CD4-positive, alpha-beta memory T cell (primary cell): ENCODE measurements at regions of chr7 and their contacts with region 1.

Region 1: DNA sequence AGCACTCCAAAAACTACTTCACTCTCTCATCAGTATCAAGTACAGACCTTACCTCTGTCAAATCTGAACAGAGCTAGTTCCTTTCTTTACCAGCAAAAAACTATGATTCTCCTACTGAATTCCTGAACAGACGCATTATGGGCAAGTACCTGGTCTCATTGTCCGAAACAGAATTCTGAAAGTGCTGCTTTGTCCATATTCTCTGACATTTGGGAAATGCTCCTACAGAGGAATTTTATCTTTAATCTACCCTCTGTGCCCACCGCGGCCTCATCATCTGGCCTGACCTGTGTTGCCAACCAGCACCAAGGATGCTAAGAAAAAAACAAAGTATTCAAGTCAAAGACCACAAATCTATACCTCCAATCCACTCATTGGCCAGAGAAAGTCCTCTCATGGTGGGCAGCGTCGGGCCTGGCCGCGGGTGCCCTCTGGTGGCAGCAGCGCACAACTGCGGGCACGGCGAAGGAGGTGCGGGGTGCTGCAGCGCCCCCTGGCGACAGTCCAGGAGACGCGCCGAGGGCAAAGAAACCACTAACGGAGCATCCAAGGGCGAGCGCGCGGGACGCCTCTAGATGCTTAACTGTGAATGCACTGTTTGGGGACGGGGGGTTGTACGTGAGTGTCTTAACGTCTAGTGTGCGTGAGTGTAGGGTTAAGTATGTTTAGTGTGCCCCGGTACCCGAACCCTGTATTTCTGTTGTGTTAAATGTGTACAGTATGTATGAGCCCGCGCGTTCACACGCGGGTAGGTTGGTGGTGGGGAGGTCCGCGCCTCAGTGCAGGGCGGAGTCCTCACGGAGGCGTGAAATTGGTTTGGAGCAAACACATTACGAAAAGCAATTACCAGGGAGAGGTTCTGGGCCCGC is 5.0 kb upstream of the GBX1 start:
- DNase-seq: peak; percentile 72 to 80 (median 75)
- H3K4me3 ChIP-seq: no peak overlapping the region
- H3K4me3 Mint-ChIP-seq: peak overlapping the region in 1 of 8 donors; percentile 50
- H3K27ac ChIP-seq: no peak overlapping the region
- H3K27ac Mint-ChIP-seq: peak overlapping the region in 4 of 7 donors; percentile 41 to 65 (median 62)
- H3K4me1 ChIP-seq: no peaks in the 10 kb centered on the region
- H3K4me1 Mint-ChIP-seq: peaks cover 11 to 21% (median 16%) of the 10 kb centered on the region in 4 donors
- H3K27me3 ChIP-seq: peaks cover 14% of the 10 kb centered on the region
- H3K27me3 Mint-ChIP-seq: peaks cover 25 to 40% of the 10 kb centered on the region in 2 donors

Region 2: DNA sequence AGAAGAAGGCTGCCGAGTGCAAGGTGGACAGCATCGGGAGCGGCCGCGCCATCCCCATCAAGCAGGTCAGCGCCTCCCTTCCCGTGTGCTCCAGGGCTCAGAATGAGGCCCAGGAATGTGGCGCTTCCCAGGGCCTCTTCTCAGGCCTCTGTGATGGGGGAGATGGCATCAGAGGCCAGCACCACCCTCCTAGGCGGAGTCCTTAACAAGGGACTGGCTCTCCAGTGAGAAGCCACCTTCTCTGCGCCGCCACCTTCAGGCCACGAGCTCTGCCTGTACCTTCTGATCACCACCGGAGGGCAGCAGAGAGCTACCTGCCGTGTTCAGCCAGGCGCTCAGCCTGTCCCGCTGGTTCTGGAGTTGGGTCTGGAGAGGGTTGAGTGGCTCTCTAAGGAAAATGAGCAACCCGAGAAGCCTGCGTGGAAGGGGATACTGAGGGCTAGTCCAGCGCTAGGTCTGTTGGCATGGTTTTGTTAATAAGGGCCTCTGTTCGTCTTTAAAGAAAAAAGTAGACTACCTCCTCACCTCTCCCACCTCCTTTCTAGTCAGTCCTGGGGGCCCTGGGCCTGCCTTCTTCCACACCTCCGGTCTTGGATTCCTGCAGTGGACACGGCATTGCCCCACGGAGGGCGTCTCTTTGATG is 48.6 kb before region 1 on chr7:
- CTCF ChIA-PET with region 1: interaction called, 12 read pairs
- POLR2A ChIA-PET with region 1: no interaction called
- intact Hi-C with region 1: loop called (anchors 1 kb)
- DNase-seq: peak; percentile 73 to 82 (median 80)
- H3K4me3 ChIP-seq: no peak overlapping the region
- H3K4me3 Mint-ChIP-seq: no peak overlapping the region
- H3K27ac ChIP-seq: no peak overlapping the region
- H3K27ac Mint-ChIP-seq: peak overlapping the region in 3 of 7 donors; percentile 31 to 70 (median 47)
- H3K4me1 ChIP-seq: peaks cover 4% of the 10 kb centered on the region
- H3K4me1 Mint-ChIP-seq: peaks cover 4 to 19% (median 10%) of the 10 kb centered on the region in 4 donors
- H3K27me3 ChIP-seq: no peaks in the 10 kb centered on the region
- H3K27me3 Mint-ChIP-seq: no peaks in the 10 kb centered on the region

Region 3: GRCh38 chr7:151198945-151199848 is 26.7 kb after region 1 on chr7:
- CTCF ChIA-PET with region 1: no interaction called
- POLR2A ChIA-PET with region 1: no interaction called
- intact Hi-C with region 1: no loop called
- DNase-seq: no peak
- H3K4me3 ChIP-seq: no peak overlapping the region
- H3K4me3 Mint-ChIP-seq: no peak overlapping the region
- H3K27ac ChIP-seq: no peak overlapping the region
- H3K27ac Mint-ChIP-seq: peak overlapping the region in 2 of 7 donors; percentile 24 to 46
- H3K4me1 ChIP-seq: peaks cover 16% of the 10 kb centered on the region
- H3K4me1 Mint-ChIP-seq: peaks cover under 1 to 10% (median 9%) of the 10 kb centered on the region in 4 donors
- H3K27me3 ChIP-seq: peaks cover 9% of the 10 kb centered on the region
- H3K27me3 Mint-ChIP-seq: no peaks in the 10 kb centered on the region

Region 4: DNA sequence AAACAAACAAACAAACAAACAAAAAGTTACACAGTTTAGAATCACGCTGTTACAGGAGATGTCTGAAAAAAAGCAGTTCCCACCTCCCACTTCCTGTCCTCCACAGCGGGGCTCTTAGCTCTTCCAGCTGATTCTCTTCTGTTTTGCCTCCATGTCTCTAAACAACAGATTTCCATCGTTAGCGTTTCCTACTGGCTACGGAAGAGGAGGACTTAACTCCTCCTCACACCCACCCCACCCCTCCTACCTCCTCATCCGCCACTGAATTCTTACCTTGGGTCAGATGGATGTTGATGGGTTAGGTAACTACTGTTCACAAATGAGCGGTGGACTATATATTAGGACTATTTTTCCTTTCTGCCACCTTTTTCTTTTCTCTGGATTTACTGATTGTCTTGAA is 132.3 kb after region 1 on chr7:
- CTCF ChIA-PET with region 1: no interaction called
- POLR2A ChIA-PET with region 1: no interaction called
- intact Hi-C with region 1: loop called (anchors 2 kb)
- DNase-seq: no peak
- H3K4me3 ChIP-seq: no peak overlapping the region
- H3K4me3 Mint-ChIP-seq: peak overlapping the region in 6 of 8 donors; percentile 35 to 71 (median 56)
- H3K27ac ChIP-seq: no peak overlapping the region
- H3K27ac Mint-ChIP-seq: peak overlapping the region in 2 of 7 donors; percentile 41 to 69
- H3K4me1 ChIP-seq: peaks cover 5% of the 10 kb centered on the region
- H3K4me1 Mint-ChIP-seq: peaks cover 3 to 12% (median 8%) of the 10 kb centered on the region in 4 donors
- H3K27me3 ChIP-seq: peaks cover 7% of the 10 kb centered on the region
- H3K27me3 Mint-ChIP-seq: peaks cover 23 to 31% of the 10 kb centered on the region in 2 donors